Calu3 (cell line): ENCODE measurements at regions of chr10 and their contacts with region 1.

Region 1: DNA sequence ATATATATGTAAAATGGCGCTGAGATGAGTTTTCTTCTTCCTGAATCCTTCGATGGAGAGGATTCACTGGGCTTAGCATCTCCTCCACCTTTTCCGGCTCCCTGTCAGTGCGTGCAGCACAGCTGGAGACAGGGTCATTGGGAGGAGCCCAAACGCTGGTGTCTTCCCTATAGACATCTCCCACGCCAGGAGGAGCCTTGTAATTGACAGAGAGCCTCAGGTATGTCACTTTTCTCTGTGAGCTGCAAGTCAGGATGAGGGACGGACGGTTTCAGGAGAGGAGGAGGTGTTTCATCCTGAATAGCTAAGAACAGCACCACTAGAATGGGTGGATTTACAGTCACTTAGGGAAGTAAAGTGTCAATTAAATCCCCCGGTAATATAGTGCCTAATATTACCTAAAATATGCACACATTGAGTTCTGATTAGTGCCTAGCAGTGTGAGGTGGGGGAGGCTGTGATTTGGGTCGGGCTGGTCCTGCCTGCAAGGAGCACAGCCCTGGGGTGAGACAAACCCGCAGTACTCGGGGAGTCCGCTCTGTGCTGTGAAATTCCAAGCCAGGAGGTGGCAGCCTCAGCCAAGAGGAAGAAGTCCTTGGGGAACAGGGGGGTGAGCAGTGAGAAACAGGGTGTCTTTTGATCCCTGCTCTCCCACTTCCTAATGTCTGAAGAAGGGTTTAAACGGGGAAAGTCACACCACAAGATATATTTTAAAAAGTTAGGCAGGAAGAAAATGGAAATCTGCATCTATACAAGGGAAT is 28.2 kb downstream of the IL15RA start:
- DNase-seq: peak; percentile 63
- H3K4me3 Mint-ChIP-seq: peak overlapping the region; percentile 7
- H3K27ac Mint-ChIP-seq: peak overlapping the region; percentile 85
- H3K4me1 Mint-ChIP-seq: peaks cover 37% of the 10 kb centered on the region
- H3K27me3 Mint-ChIP-seq: no peaks in the 10 kb centered on the region
- CTCF ChIP-seq: no peak

Region 2: GRCh38 chr10:5971315-5971832 is 22.2 kb after region 1 on chr10:
- CTCF ChIA-PET with region 1: interaction called, 9 read pairs
- intact Hi-C with region 1: loop called (anchors 2 kb)
- DNase-seq: peak; percentile 56
- H3K4me3 Mint-ChIP-seq: peak overlapping the region; percentile 55
- H3K27ac Mint-ChIP-seq: peak overlapping the region; percentile 84
- H3K4me1 Mint-ChIP-seq: peaks cover 64% of the 10 kb centered on the region
- H3K27me3 Mint-ChIP-seq: no peaks in the 10 kb centered on the region
- CTCF ChIP-seq: no peak

Region 3: GRCh38 chr10:6014241-6014761 is 65.1 kb after region 1 on chr10:
- CTCF ChIA-PET with region 1: interaction called, 3 read pairs
- intact Hi-C with region 1: loop called (anchors 1 kb)
- DNase-seq: peak; percentile 64
- H3K4me3 Mint-ChIP-seq: no peak overlapping the region
- H3K27ac Mint-ChIP-seq: no peak overlapping the region
- H3K4me1 Mint-ChIP-seq: no peaks in the 10 kb centered on the region
- H3K27me3 Mint-ChIP-seq: peaks cover 42% of the 10 kb centered on the region
- CTCF ChIP-seq: peak; percentile 53

Region 4: GRCh38 chr10:6088721-6089390 is 139.7 kb after region 1 on chr10 and contains the start of gene RBM17:
- CTCF ChIA-PET with region 1: no interaction called
- intact Hi-C with region 1: loop called (anchors 2 kb)
- DNase-seq: peak; percentile 93
- H3K4me3 Mint-ChIP-seq: peak within 1 kb of the TSS; percentile 85
- H3K27ac Mint-ChIP-seq: peak within 1 kb of the TSS; percentile 56
- H3K4me1 Mint-ChIP-seq: peaks cover 43% of the 10 kb centered on the region
- H3K27me3 Mint-ChIP-seq: peaks cover 2% of the 10 kb centered on the region
- CTCF ChIP-seq: peak; percentile 100
- total RNA-seq, gene RBM17: 133 and 139 TPM in 2 replicates